A549 (cell line): ENCODE measurements at regions of chr15 and their contacts with region 1.

Region 1: GRCh38 chr15:70806992-70807712 is 43.8 kb upstream of the UACA start:
- DNase-seq: no peak
- ATAC-seq: no peak
- H3K4me3 ChIP-seq: no peak overlapping the region
- H3K27ac ChIP-seq: peak overlapping the region in 1 of 2 experiments; percentile 41; a peak in 3 of 6 replicates
- H3K4me1 ChIP-seq: peaks cover 22% of the 10 kb centered on the region
- CTCF ChIP-seq: no peak
- EP300 ChIP-seq: no peak
- POLR2A ChIP-seq: no peak
- RAD21 ChIP-seq: no peak

Region 2: GRCh38 chr15:70617076-70617910 is 189.9 kb before region 1 on chr15:
- CTCF ChIA-PET with region 1: no interaction called
- POLR2A ChIA-PET with region 1: no interaction called
- DNase-seq: peak in 1 of 2 experiments; percentile 29
- ATAC-seq: peak; percentile 62 to 72; a peak in 4 of 6 replicates
- H3K4me3 ChIP-seq: no peak overlapping the region
- H3K27ac ChIP-seq: peak overlapping the region in 1 of 2 experiments; percentile 16; a peak in 1 of 6 replicates
- H3K4me1 ChIP-seq: peaks cover 20% of the 10 kb centered on the region
- CTCF ChIP-seq: no peak
- EP300 ChIP-seq: no peak
- POLR2A ChIP-seq: no peak
- RAD21 ChIP-seq: no peak

Region 3: DNA sequence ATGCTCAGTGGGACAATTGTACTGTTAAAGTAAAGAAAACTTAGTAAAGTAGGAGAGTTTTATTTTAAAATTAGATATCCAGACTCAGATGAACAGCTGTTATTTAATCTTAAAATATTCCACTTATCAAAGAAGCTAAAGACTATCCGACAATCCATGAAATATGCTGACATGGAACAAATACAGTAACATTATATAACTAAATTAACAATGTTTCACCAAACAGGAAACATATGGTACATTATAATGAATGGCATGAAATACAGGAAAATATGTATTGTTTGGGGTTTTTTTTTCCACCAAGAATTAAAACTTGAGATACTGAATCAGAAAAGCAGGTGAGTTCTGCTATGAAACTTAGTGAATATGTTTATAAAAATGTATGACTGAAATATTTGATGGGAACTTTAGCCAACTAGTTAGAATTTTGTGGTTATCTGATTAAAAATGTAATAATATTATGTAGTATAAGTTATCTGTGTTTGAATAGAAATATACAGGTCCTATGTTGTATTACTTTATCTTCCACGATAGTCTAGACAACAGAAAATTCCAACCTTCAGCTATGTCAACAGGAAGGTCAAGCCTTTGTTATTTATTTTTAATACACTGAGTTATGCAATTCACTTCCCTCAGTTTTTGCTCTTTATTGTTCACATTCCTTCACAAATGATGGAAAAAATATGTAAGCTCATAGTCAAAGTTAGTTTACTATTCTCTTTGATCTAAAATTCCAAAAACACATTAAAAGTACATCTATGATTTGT is 116.5 kb before region 1 on chr15:
- CTCF ChIA-PET with region 1: interaction called, 39 read pairs
- POLR2A ChIA-PET with region 1: interaction called, 4 read pairs
- DNase-seq: peak in 1 of 2 experiments; percentile 26
- ATAC-seq: no peak
- H3K4me3 ChIP-seq: no peak overlapping the region; the same call in 2 of the 3 replicates
- H3K27ac ChIP-seq: peak overlapping the region; percentile 3 to 11; a peak in 1 of 6 replicates
- H3K4me1 ChIP-seq: peaks cover 38% of the 10 kb centered on the region
- CTCF ChIP-seq: no peak
- EP300 ChIP-seq: no peak
- POLR2A ChIP-seq: no peak
- RAD21 ChIP-seq: no peak

Region 4: DNA sequence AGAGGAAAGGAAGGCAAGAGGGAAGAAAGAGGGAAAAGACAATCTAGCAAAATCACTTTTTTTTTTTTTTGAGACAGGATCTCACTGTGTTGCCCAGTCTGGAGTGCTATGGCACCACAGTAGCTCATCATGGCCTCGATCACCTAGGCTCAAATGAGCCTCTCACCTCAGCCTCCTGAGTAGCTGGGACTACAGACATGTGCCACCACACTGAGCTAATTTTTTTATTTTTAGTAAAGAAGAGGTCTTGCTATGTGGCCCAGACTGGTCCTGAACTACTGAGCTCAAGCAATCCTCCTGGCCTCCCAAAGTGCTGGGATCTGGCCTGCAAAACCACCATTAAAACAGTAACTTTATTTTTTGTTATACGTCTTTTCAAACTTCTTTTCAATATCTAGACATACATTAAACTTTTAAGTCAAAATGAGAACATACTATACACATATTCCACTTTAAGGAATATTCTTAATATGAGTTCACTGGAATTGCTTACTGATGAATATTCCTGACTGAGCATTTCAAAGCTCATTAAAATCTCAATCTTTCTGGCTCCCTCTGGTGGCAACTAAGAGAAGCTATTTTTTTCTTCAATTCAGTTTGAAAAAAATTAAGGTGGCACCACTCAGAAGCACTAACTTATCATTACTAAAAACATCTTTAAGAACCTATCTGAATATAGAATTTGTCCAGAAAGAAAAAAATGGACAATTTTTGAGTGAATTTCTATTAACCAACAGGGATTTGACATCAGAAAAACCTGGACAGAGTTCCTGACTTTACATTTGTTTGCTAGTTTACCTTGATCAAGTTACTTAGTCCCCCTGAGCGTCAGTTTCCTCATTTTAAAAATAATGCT is 84.7 kb before region 1 on chr15:
- CTCF ChIA-PET with region 1: interaction called, 64 read pairs
- POLR2A ChIA-PET with region 1: no interaction called
- DNase-seq: peak; percentile 65 to 78
- ATAC-seq: peak; percentile 21 to 65; a peak in 3 of 6 replicates
- H3K4me3 ChIP-seq: no peak overlapping the region
- H3K27ac ChIP-seq: peak overlapping the region in 1 of 2 experiments; percentile 45; a peak in 2 of 6 replicates
- H3K4me1 ChIP-seq: peaks cover 19% of the 10 kb centered on the region
- CTCF ChIP-seq: peak; percentile 90
- EP300 ChIP-seq: no peak
- POLR2A ChIP-seq: no peak
- RAD21 ChIP-seq: peak; percentile 69 to 80

Region 5: GRCh38 chr15:70763120-70763878 is 43.9 kb before region 1 on chr15 and contains the start of gene UACA:
- CTCF ChIA-PET with region 1: interaction called, 36 read pairs
- POLR2A ChIA-PET with region 1: interaction called, 8 read pairs
- DNase-seq: peak; percentile 98 to 99
- ATAC-seq: peak; percentile 92 to 95
- H3K4me3 ChIP-seq: peak within 1 kb of the TSS; percentile 93
- H3K27ac ChIP-seq: peak within 1 kb of the TSS; percentile 92 to 95
- H3K4me1 ChIP-seq: peaks cover 49% of the 10 kb centered on the region
- CTCF ChIP-seq: no peak
- EP300 ChIP-seq: no peak
- POLR2A ChIP-seq: peak; percentile 91
- RAD21 ChIP-seq: peak in 1 of 2 experiments; percentile 13; a peak in 1 of 5 replicates
- polyA plus RNA-seq, gene UACA: 80.4 and 81.1 TPM in 2 replicates

Region 6: GRCh38 chr15:70833897-70834765 is 27.0 kb after region 1 on chr15:
- CTCF ChIA-PET with region 1: interaction called, 53 read pairs
- POLR2A ChIA-PET with region 1: no interaction called
- DNase-seq: peak; percentile 73 to 77
- ATAC-seq: peak; percentile 47 to 80; a peak in 4 of 6 replicates
- H3K4me3 ChIP-seq: no peak overlapping the region
- H3K27ac ChIP-seq: peak overlapping the region; percentile 70 to 85
- H3K4me1 ChIP-seq: peaks cover 40% of the 10 kb centered on the region
- CTCF ChIP-seq: no peak
- EP300 ChIP-seq: peak; percentile 23 to 29; a peak in 2 of 5 replicates
- POLR2A ChIP-seq: no peak
- RAD21 ChIP-seq: no peak

Region 7: DNA sequence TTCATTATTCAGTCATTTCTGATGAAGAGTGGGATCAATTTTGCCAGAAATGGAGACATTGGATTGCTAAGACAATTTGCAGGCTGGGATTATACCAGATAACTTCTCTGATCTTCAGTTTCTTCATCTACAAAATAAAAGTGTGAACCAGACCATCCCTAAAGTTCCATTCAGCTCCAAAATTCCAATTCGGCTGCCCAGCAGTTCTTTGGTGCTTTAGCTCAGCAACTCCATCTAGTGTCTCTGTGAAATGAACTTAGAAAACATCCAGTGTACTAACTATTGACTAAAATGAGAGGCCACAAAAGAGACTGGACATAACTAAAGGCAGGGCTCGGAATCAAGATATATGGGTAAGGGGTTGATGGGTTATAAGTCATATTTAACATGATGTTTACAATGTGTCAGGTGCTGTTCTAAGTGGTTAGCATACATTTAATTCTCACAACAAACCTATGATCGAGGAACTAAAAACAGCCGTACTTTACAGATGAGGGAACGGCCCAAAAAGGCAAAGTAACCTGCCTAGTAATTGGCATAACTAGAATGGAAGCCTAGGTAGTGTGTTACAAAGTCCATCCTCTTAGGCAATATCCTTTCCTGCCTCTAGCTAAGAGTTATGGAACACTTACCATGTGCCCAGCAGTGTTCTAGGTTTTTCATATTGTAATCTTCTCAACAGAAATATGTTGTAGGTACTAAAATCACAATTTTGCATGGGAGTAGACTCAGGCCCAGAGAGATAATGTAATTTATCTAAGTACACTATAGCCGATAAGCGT is 68.0 kb after region 1 on chr15:
- CTCF ChIA-PET with region 1: interaction called, 40 read pairs
- POLR2A ChIA-PET with region 1: no interaction called
- DNase-seq: peak in 1 of 2 experiments; percentile 42
- ATAC-seq: peak; percentile 83 to 88; a peak in 4 of 6 replicates
- H3K4me3 ChIP-seq: no peak overlapping the region
- H3K27ac ChIP-seq: peak overlapping the region in 1 of 2 experiments; percentile 15; a peak in 3 of 6 replicates
- H3K4me1 ChIP-seq: peaks cover 7% of the 10 kb centered on the region; the same call in 2 of the 3 replicates
- CTCF ChIP-seq: peak; percentile 97
- EP300 ChIP-seq: no peak
- POLR2A ChIP-seq: no peak
- RAD21 ChIP-seq: peak; percentile 95